H1 (cell line): ENCODE measurements at regions of chr17 and their contacts with region 1.

Region 1: DNA sequence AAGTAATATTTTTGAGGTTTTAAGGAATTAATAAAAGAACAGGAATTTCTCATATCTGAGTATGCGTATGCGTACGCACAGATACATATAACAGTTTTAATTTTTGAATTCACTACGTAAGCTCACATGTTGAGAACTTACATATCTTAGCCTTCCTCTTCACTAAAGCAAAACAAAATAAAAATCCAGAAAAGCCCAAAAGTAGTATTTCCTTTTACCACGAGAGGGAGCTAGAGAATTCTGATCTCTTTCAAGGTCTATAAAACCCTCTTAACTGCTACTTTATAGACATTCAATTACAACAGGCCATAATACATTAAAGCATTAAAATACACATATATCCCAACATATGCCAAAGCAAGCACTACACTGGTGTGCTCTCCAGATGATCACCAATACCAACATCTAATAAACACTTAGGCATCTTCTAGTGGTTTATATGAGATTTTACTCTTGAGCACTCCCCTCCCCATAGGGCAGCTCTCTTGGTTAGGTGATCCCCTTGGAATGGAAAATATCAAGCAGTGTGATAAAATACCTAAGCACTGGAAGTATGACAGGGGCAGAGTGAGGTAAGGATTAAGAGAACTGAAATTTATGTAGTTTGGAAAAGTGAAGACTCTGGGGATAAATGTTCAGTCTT is 94.0 kb downstream of the SKAP1 start:
- DNase-seq: no peak
- H3K4me3 ChIP-seq: no peak overlapping the region
- H3K27ac ChIP-seq: no peak overlapping the region
- H3K4me1 ChIP-seq: no peaks in the 10 kb centered on the region
- H3K27me3 ChIP-seq: peaks cover 0 to 2% (median 0%) of the 10 kb centered on the region in 4 experiments; a peak in 2 of 7 replicates
- CTCF ChIP-seq: peak in 2 of 3 experiments; percentile 37 to 50; a peak in 2 of 4 replicates
- EP300 ChIP-seq: no peak
- POLR2A ChIP-seq: no peak
- RAD21 ChIP-seq: peak; percentile 49 to 67

Region 2: GRCh38 chr17:48093341-48094045 is 242.5 kb before region 1 on chr17:
- CTCF ChIA-PET with region 1: no interaction called
- POLR2A ChIA-PET with region 1: no interaction called
- DNase-seq: no peak
- H3K4me3 ChIP-seq: no peak overlapping the region
- H3K27ac ChIP-seq: no peak overlapping the region
- H3K4me1 ChIP-seq: no peaks in the 10 kb centered on the region
- H3K27me3 ChIP-seq: no peaks in the 10 kb centered on the region
- CTCF ChIP-seq: no peak
- EP300 ChIP-seq: no peak
- POLR2A ChIP-seq: no peak
- RAD21 ChIP-seq: no peak

Region 3: GRCh38 chr17:48278760-48279491 is 57.1 kb before region 1 on chr17:
- CTCF ChIA-PET with region 1: no interaction called
- POLR2A ChIA-PET with region 1: no interaction called
- DNase-seq: no peak
- H3K4me3 ChIP-seq: no peak overlapping the region
- H3K27ac ChIP-seq: no peak overlapping the region
- H3K4me1 ChIP-seq: no peaks in the 10 kb centered on the region
- H3K27me3 ChIP-seq: no peaks in the 10 kb centered on the region
- CTCF ChIP-seq: no peak
- EP300 ChIP-seq: no peak
- POLR2A ChIP-seq: no peak
- RAD21 ChIP-seq: no peak

Region 4: GRCh38 chr17:48322060-48322459 is 13.9 kb before region 1 on chr17:
- CTCF ChIA-PET with region 1: interaction called, 18 read pairs
- POLR2A ChIA-PET with region 1: no interaction called
- DNase-seq: no peak
- H3K4me3 ChIP-seq: no peak overlapping the region
- H3K27ac ChIP-seq: no peak overlapping the region
- H3K4me1 ChIP-seq: no peaks in the 10 kb centered on the region
- H3K27me3 ChIP-seq: no peaks in the 10 kb centered on the region
- CTCF ChIP-seq: no peak
- EP300 ChIP-seq: no peak
- POLR2A ChIP-seq: no peak
- RAD21 ChIP-seq: no peak

Region 5: DNA sequence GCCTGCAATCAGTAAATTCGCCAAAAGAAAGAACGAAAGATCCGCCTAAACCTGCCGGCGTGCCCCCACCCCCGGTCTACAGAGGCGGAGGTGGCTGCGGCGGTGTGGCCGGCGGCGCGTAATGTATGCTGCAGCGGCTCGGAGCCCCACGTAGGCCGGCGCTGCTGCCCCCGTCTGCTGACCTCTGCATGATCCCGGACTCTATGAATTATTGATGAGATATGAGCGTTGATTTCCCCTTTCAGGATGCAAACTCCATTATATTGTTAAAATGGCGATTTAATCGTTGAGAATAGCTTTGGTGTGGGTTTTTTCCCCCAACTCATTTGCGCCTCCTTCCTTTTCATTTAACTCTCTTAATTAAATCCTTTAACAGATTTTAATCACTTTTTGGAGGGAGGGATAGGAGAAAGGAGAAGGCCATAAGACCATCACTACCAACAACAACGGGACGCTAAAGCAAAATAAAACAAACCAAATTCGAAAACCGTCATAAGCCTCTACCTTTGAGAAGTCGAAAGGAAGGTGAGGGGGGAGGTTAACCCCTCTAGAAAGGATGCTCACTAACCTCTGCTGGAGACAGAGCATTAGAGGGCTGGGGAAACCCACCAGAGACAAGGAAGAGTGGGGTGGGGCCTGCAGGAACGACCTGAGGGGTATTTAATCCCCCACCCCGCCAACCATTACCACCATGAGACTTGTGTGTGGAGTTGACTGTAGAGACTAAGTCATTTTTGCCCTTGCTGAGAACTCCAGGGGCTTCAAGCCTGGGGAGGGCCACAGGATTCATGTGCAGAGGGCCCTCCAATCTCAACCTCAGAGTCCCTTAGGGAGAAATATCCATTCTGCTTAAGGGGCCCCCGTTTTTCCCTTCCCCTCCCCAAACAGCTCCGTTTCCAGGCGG is 250.6 kb after region 1 on chr17:
- CTCF ChIA-PET with region 1: interaction called, 24 read pairs
- POLR2A ChIA-PET with region 1: no interaction called
- DNase-seq: no peak
- H3K4me3 ChIP-seq: 0 out of 8 replicates have a peak overlapping the region, but pooled peaks of 1 of the 4 experiments have one; percentile 42
- H3K27ac ChIP-seq: no peak overlapping the region
- H3K4me1 ChIP-seq: peaks cover 0 to 5% (median 3%) of the 10 kb centered on the region in 4 experiments; a peak in 4 of 7 replicates
- H3K27me3 ChIP-seq: peaks cover 99 to 100% (median 100%) of the 10 kb centered on the region in 4 experiments
- CTCF ChIP-seq: no peak
- EP300 ChIP-seq: no peak
- POLR2A ChIP-seq: no peak
- RAD21 ChIP-seq: no peak